ENCODE measurements at regions of chr5 and their contacts with region 1.

Region 1: DNA sequence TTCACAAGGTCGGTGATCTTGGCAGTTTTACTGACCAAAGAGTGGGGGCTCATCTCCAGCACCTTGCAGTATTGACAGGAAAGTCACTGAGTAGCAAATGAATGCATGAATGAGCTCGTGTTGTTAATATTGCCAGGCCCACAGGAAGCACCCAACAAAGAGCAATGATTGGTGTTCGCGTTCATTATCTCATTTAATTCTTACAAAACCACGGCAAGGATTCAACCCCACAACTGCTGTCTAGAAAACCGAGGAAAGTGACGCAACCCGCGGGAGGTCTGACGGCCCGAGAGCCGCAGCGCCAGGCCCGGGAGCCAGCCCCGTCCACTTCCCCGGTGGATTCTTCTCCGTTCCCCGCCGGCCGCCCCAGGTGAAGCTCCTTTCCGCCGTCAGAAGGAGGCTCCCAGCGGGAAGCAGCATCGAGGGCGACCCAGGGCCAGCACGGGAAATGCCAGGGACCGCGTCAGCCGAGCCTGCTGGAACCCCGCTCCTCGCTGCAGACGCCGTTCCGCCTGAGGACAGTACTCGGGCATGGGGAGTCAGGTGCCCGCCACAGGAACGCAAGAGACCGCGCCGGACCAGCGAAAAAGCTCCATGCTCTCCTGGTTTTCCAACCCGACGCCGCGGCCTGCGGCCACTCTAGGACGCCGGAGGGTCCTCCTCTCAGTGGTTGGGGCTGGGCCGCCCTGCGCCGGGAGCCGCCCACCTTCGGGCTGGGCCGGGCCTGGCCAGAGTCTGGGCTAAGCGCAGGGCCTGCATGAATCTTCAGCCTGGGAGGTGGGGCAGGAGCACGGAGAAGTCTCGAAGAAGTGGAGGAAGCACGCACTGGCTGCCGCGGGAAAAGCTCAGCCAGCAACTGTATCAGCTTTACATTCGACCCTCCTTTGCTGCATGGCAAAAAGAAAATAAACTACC is 19.8 kb upstream of the FER start:
- DNase-seq: peak; percentile 96
- H3K4me3 ChIP-seq: peak overlapping the region; percentile 67 to 84 (median 73)
- H3K27ac ChIP-seq: peak overlapping the region; percentile 88 to 91 (median 89)
- H3K4me1 ChIP-seq: peaks cover 0 to 19% (median 4%) of the 10 kb centered on the region in 4 donors
- H3K27me3 ChIP-seq: no peaks in the 10 kb centered on the region
- CTCF ChIP-seq: no peak
- EP300 ChIP-seq: peak in 1 of 4 donors; percentile 17
- POLR2A ChIP-seq: peak; percentile 82 to 84

Region 2: DNA sequence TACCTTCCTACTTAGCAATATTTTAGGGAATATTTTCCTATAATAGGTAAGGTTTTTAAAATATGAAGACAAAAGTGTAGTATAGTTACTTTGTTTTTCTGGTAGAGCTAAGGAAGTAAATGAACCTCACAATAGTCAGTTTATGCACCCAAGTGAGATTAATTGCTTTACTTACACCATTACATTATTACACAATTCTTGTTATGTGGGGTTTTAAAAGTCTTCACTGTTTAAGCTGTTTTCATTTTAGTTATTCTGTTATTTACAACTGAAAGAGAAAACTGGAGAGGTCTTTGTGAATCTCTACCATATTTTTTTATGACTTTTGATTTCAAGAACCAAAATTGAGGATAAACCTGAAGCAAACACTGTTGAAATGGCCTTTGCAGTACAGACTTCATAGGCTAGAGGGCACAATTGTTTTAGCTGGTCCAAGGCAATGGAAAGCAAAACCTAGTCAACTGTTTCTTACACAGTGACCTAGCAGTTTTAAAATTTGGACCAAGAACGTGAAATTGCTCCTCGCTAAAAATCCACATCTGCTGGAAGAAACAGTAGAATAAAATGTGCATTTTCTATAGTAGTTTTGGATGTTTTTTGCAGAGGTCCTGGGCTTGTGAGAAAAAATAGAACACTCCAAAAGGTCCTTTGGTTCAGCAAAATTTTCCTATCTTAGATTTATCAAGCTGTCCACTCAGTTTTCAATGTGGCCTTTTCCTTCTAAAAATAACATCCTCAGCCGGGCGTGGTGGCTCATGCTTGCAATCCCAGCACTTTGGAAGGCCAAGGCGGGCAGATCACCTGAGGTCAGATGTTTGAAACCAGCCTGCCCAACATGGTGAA is 46.6 kb before region 1 on chr5:
- intact Hi-C with region 1: loop called (anchors 2 kb)
- DNase-seq: no peak
- H3K4me3 ChIP-seq: peak overlapping the region in 1 of 4 donors; percentile 28
- H3K27ac ChIP-seq: peak overlapping the region; percentile 44 to 75 (median 50)
- H3K4me1 ChIP-seq: no peaks in the 10 kb centered on the region
- H3K27me3 ChIP-seq: no peaks in the 10 kb centered on the region
- CTCF ChIP-seq: peak; percentile 69 to 90 (median 84)
- EP300 ChIP-seq: no peak
- POLR2A ChIP-seq: no peak

Region 3: DNA sequence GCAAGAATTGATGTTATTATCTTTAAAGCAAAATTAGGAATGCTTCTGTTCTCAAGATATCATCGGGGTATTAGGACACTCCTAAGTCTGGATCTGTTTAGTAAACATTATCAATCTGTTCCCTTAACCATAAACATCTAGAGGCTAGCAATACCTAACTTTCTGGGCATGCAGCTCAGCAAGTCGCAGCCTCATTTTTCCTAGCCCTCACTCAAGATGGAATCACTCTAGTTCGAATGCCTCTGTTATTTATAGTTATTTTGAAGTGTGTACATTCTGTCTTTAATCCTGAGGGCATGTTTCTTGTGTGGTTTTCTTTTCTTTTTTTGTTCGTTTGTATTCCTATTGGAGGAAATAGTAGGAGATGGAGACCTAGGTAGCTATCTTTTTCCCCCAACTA is 86.6 kb after region 1 on chr5:
- intact Hi-C with region 1: loop called (anchors 1 kb)
- DNase-seq: no peak
- H3K4me3 ChIP-seq: peak overlapping the region in 1 of 4 donors; percentile 6
- H3K27ac ChIP-seq: peak overlapping the region in 3 of 4 donors; percentile 5 to 49 (median 48)
- H3K4me1 ChIP-seq: peaks cover 0 to 55% (median 34%) of the 10 kb centered on the region in 4 donors
- H3K27me3 ChIP-seq: no peaks in the 10 kb centered on the region
- CTCF ChIP-seq: no peak
- EP300 ChIP-seq: no peak
- POLR2A ChIP-seq: no peak

Measured in sigmoid colon (tissue), 7 donors.